Stomach (tissue), 19 donors: ENCODE measurements at regions of chr9 and their contacts with region 1.

Region 1: GRCh38 chr9:82549174-82549821 is 513.6 kb downstream of the RASEF start:
- DNase-seq: no peak
- H3K4me3 ChIP-seq: no peak overlapping the region
- H3K27ac ChIP-seq: no peak overlapping the region
- H3K4me1 ChIP-seq: peaks cover 0 to 15% (median 11%) of the 10 kb centered on the region in 4 donors
- H3K27me3 ChIP-seq: no peaks in the 10 kb centered on the region
- CTCF ChIP-seq: no peak
- EP300 ChIP-seq: no peak
- POLR2A ChIP-seq: no peak

Region 2: GRCh38 chr9:82606492-82607382 is 57.4 kb after region 1 on chr9:
- intact Hi-C with region 1: loop called (anchors 10 kb)
- DNase-seq: peak; percentile 39 to 91
- H3K4me3 ChIP-seq: no peak overlapping the region
- H3K27ac ChIP-seq: no peak overlapping the region
- H3K4me1 ChIP-seq: peaks cover 0 to 21% (median 14%) of the 10 kb centered on the region in 4 donors
- H3K27me3 ChIP-seq: no peaks in the 10 kb centered on the region
- CTCF ChIP-seq: peak in 5 of 7 experiments; percentile 35 to 57 (median 44)
- EP300 ChIP-seq: no peak
- POLR2A ChIP-seq: no peak